ENCODE measurements at regions of chr18 and their contacts with region 1.

Region 1: DNA sequence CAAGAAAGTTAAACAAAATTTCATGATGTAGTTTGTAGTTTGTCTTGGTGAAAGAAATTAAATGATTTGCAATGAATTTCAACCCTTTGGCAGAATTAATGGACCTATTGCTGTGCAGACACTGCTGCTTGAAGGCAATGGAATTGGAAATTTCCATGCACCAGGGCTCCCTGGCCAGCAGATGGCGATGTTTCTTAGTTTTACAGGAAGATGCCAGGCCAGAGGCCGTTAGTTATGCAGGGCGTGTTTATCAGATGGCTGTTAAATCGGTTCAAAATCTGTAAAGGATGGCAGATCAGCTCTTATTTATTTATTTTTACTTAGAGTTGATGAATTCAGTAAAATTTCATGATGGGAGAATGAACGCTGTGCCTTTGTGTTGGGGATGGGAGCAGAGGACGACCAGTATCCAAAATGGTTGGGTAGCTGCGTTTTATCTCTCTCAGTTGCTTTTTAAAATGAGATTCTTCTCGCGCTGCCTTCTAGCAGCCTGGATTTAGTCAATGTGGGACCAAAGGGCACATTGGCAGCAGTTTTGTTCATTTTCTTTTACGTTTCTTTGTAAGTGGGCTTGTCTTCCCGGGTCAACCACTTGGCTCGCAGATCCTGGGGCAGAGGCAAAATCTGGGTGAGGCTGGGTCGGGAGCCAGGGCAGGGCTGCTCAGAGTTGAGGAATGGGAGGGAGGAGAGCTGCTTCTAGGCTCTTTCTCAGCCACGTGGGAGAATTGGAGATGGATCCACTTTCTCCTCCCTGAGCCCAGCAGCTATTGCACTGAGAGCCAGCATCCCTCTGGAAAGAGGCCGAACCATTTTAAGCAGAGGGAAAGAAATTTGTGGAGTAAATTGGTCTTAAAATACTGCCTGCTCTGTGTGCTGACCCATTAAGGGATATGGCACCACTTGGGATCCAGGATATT is 344.0 kb downstream of the PIK3C3 start:
- DNase-seq: peak in 8 of 9 donors; percentile 1 to 49 (median 36)
- ATAC-seq: peak; percentile 63
- H3K4me3 ChIP-seq: no peak overlapping the region
- H3K4me3 Mint-ChIP-seq: no peak overlapping the region
- H3K27ac ChIP-seq: no peak overlapping the region
- H3K27ac Mint-ChIP-seq: no peak overlapping the region
- H3K4me1 ChIP-seq: no peaks in the 10 kb centered on the region
- H3K4me1 Mint-ChIP-seq: peaks cover 0 to 4% (median 0%) of the 10 kb centered on the region in 7 donors
- H3K27me3 ChIP-seq: no peaks in the 10 kb centered on the region
- H3K27me3 Mint-ChIP-seq: peaks cover 0 to 5% (median 2%) of the 10 kb centered on the region in 5 donors

Region 2: GRCh38 chr18:42011053-42011452 is 288.0 kb before region 1 on chr18:
- CTCF ChIA-PET with region 1: no interaction called
- POLR2A ChIA-PET with region 1: no interaction called
- intact Hi-C with region 1: no loop called
- DNase-seq: no peak
- ATAC-seq: no peak
- H3K4me3 ChIP-seq: no peak overlapping the region
- H3K4me3 Mint-ChIP-seq: no peak overlapping the region
- H3K27ac ChIP-seq: no peak overlapping the region
- H3K27ac Mint-ChIP-seq: peak overlapping the region in 2 of 9 donors; percentile 16 to 38
- H3K4me1 ChIP-seq: no peaks in the 10 kb centered on the region
- H3K4me1 Mint-ChIP-seq: peaks cover 0 to 20% (median 5%) of the 10 kb centered on the region in 7 donors
- H3K27me3 ChIP-seq: no peaks in the 10 kb centered on the region
- H3K27me3 Mint-ChIP-seq: no peaks in the 10 kb centered on the region

Region 3: DNA sequence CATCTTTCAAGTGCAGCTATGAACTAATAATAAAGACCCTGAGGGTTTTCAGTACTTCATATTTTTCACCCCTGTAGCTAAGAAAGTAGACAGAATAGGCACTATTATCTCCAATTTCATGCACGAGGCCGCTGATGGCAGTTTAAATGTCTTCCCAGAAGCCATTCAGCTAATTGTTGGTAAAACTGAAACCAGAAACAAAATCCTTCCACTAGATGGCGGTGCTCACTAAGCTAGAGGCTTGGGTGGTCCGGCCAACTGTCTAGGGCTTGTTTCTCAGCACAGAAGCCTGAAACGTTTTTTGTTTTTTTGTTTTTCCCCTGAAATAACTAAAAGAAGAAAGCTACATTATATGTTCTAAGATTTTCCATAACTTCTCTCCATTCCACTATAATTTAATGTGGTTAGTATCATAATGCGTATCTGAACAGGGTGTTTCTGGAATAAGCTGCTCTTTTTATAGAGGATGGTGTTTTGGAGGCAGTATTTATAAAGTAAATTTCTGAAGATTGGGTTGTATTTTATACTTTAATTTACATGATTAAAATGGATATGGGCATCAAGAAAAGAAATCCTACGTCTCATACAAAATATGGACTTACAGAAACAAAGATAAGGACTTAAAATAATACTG is 184.6 kb before region 1 on chr18:
- CTCF ChIA-PET with region 1: no interaction called
- POLR2A ChIA-PET with region 1: no interaction called
- intact Hi-C with region 1: loop called in 1 of 2 experiments (anchors 1 kb)
- DNase-seq: peak; percentile 7 to 57 (median 49)
- ATAC-seq: peak; percentile 79
- H3K4me3 ChIP-seq: no peak overlapping the region
- H3K4me3 Mint-ChIP-seq: peak overlapping the region in 6 of 10 donors; percentile 23 to 46 (median 44)
- H3K27ac ChIP-seq: no peak overlapping the region
- H3K27ac Mint-ChIP-seq: peak overlapping the region in 2 of 9 donors; percentile 15 to 43
- H3K4me1 ChIP-seq: peaks cover 0 to 4% of the 10 kb centered on the region in 2 donors
- H3K4me1 Mint-ChIP-seq: peaks cover 0 to 13% (median 12%) of the 10 kb centered on the region in 7 donors
- H3K27me3 ChIP-seq: no peaks in the 10 kb centered on the region
- H3K27me3 Mint-ChIP-seq: peaks cover 0 to 20% (median 0%) of the 10 kb centered on the region in 5 donors

Region 4: GRCh38 chr18:42242758-42243157 is 56.3 kb before region 1 on chr18:
- CTCF ChIA-PET with region 1: no interaction called
- POLR2A ChIA-PET with region 1: no interaction called
- intact Hi-C with region 1: no loop called
- DNase-seq: no peak
- ATAC-seq: no peak
- H3K4me3 ChIP-seq: no peak overlapping the region
- H3K4me3 Mint-ChIP-seq: no peak overlapping the region
- H3K27ac ChIP-seq: no peak overlapping the region
- H3K27ac Mint-ChIP-seq: no peak overlapping the region
- H3K4me1 ChIP-seq: no peaks in the 10 kb centered on the region
- H3K4me1 Mint-ChIP-seq: no peaks in the 10 kb centered on the region
- H3K27me3 ChIP-seq: no peaks in the 10 kb centered on the region
- H3K27me3 Mint-ChIP-seq: peaks cover 0 to 6% (median 0%) of the 10 kb centered on the region in 5 donors

Region 5: DNA sequence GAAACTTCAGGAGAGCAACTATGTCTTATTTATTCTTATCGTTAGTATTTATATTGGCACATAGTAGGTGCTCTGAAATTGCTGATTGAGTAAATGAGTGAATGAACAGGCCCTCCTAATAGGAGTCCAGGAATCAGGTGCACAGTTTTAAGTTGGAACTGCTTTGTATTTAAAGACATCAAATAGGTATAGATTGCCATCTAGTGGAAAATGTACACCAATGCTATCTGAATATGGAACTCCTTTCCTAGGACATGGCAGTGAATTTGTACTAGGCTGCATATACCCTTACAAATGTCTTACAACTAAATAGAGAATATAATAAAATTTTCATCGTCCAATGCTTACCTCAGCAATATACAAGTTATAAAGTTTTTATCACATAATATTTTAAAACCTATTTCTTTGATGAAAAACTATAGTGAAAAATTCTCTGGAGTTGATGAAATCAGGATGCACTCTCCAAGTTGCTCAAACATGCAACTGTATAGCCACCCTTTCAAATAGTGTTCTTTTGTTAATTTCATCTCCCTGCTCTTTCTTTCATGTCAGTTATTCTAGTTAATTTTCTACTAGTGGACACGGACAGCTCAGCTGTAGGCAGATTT is 1297.2 kb after region 1 on chr18:
- CTCF ChIA-PET with region 1: no interaction called
- POLR2A ChIA-PET with region 1: no interaction called
- intact Hi-C with region 1: loop called (anchors 2 to 5 kb)
- DNase-seq: no peak
- ATAC-seq: no peak
- H3K4me3 ChIP-seq: no peak overlapping the region
- H3K4me3 Mint-ChIP-seq: no peak overlapping the region
- H3K27ac ChIP-seq: no peak overlapping the region
- H3K27ac Mint-ChIP-seq: no peak overlapping the region
- H3K4me1 ChIP-seq: no peaks in the 10 kb centered on the region
- H3K4me1 Mint-ChIP-seq: no peaks in the 10 kb centered on the region
- H3K27me3 ChIP-seq: no peaks in the 10 kb centered on the region
- H3K27me3 Mint-ChIP-seq: peaks cover 0 to 9% (median 0%) of the 10 kb centered on the region in 5 donors